Caco-2 (cell line): ENCODE measurements at regions of chr6 and their contacts with region 1.

Region 1: GRCh38 chr6:157994126-157994795 is 12.6 kb downstream of the SYNJ2 start:
- DNase-seq: peak; percentile 50 to 66
- H3K4me3 ChIP-seq: no peak overlapping the region
- H3K4me3 Mint-ChIP-seq: no peak overlapping the region
- H3K27ac Mint-ChIP-seq: peak overlapping the region; percentile 74
- H3K4me1 ChIP-seq: peaks cover 21% of the 10 kb centered on the region
- H3K4me1 Mint-ChIP-seq: peaks cover 55% of the 10 kb centered on the region
- H3K27me3 ChIP-seq: no peaks in the 10 kb centered on the region
- H3K27me3 Mint-ChIP-seq: no peaks in the 10 kb centered on the region
- CTCF ChIP-seq: no peak

Region 2: DNA sequence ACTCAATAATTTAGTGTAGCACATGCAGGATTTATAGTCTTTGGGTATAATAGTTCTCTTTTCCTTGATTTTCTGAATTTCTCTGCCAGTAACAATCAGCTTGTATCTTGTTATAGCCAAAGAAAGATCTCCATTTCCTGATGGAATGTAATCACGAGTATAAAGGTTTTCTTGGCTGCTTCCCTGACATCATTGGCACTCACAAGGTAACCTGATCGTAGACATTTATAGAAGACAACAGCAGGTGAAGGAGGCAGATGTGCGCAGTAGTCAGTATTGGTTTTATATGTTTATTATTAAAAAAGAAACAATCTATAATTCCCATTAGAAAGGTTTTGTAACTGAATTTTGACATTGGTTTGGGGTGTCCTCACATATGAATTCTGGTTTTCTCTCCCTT is 56.9 kb before region 1 on chr6:
- CTCF ChIA-PET with region 1: no interaction called
- POLR2A ChIA-PET with region 1: no interaction called
- intact Hi-C with region 1: no loop called
- DNase-seq: no peak
- H3K4me3 ChIP-seq: no peak overlapping the region
- H3K4me3 Mint-ChIP-seq: no peak overlapping the region
- H3K27ac Mint-ChIP-seq: no peak overlapping the region
- H3K4me1 ChIP-seq: peaks cover 6% of the 10 kb centered on the region; the same call in 1 of the 2 replicates
- H3K4me1 Mint-ChIP-seq: no peaks in the 10 kb centered on the region
- H3K27me3 ChIP-seq: no peaks in the 10 kb centered on the region
- H3K27me3 Mint-ChIP-seq: no peaks in the 10 kb centered on the region
- CTCF ChIP-seq: no peak

Region 3: DNA sequence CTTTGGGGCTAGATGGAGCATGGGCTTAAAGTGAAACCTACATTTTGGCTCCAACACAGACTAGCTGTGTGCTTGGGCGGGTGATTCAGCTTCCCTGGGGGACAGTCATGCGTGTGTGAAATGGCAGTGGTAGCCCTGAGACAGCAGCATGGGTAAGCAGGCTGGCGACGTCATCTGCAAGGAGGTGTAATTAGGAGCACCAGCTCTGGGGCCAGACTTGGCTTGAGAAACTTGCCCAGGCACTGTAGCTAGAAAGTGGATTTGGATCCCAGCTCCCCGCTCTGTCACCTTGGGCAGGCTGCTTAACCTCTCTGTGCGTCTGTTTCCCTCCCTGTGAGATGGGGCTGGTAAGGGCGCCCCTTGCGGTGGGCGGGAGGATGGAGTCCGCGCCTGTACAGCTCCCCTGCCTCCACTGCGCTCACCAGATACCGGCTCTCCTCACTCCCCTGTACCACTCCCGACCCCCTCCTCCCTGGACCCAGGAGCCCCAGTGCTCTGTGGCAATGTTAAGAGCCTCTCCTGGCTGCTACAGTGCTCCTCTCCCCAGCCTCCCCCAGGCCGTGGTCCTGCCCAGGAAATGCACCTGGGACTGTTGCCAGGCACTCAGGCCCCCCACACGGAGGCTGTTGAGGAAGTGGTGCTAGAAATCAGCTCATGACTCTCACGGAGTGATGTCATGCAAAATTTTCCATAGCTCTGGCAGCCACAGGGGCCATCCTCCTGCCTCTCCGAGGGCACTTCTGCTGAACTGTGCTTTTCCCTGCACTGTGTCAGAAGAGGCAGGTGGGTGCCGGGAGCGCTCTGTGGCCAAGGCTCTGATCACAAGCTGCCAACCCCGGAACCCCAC is 32.0 kb after region 1 on chr6:
- CTCF ChIA-PET with region 1: no interaction called
- POLR2A ChIA-PET with region 1: interaction called, 12 read pairs
- intact Hi-C with region 1: no loop called
- DNase-seq: no peak
- H3K4me3 ChIP-seq: no peak overlapping the region
- H3K4me3 Mint-ChIP-seq: no peak overlapping the region
- H3K27ac Mint-ChIP-seq: peak overlapping the region; percentile 84
- H3K4me1 ChIP-seq: peaks cover 10% of the 10 kb centered on the region
- H3K4me1 Mint-ChIP-seq: peaks cover 17% of the 10 kb centered on the region
- H3K27me3 ChIP-seq: no peaks in the 10 kb centered on the region
- H3K27me3 Mint-ChIP-seq: no peaks in the 10 kb centered on the region
- CTCF ChIP-seq: no peak

Region 4: DNA sequence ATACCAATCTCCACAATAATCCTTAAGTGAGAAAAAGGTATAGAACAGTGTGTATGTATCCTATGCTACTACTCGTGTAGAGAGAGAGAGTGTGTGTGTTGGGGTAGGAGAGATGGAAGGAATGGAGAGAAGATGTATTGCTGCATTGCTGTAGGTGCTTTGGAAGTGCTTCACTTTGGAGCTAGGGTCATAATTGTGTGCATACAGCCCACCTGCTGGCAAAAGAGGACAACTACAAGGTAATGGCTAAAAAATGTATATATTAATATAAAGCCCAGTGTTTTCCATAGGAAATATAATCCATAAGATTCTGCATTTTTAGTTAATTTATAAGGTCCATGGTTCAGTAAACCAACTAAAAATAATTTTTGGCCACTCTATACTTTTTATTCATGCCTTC is 137.7 kb after region 1 on chr6:
- CTCF ChIA-PET with region 1: no interaction called
- POLR2A ChIA-PET with region 1: no interaction called
- intact Hi-C with region 1: no loop called
- DNase-seq: peak in 1 of 2 experiments; percentile 37
- H3K4me3 ChIP-seq: no peak overlapping the region
- H3K4me3 Mint-ChIP-seq: no peak overlapping the region
- H3K27ac Mint-ChIP-seq: no peak overlapping the region
- H3K4me1 ChIP-seq: no peaks in the 10 kb centered on the region
- H3K4me1 Mint-ChIP-seq: no peaks in the 10 kb centered on the region
- H3K27me3 ChIP-seq: no peaks in the 10 kb centered on the region
- H3K27me3 Mint-ChIP-seq: no peaks in the 10 kb centered on the region
- CTCF ChIP-seq: peak; percentile 56 to 67